G401 (cell line): ENCODE measurements at regions of chr14 and their contacts with region 1.

Region 1: GRCh38 chr14:68444449-68445168 is 348.3 kb downstream of the ZFP36L1 start:
- DNase-seq: no peak

Region 2: GRCh38 chr14:68076451-68076850 is 368.2 kb before region 1 on chr14:
- in situ Hi-C with region 1: no loop called
- DNase-seq: no peak

Region 3: GRCh38 chr14:68408680-68409079 is 35.9 kb before region 1 on chr14:
- in situ Hi-C with region 1: loop called (anchors 5 kb)
- DNase-seq: no peak

Region 4: DNA sequence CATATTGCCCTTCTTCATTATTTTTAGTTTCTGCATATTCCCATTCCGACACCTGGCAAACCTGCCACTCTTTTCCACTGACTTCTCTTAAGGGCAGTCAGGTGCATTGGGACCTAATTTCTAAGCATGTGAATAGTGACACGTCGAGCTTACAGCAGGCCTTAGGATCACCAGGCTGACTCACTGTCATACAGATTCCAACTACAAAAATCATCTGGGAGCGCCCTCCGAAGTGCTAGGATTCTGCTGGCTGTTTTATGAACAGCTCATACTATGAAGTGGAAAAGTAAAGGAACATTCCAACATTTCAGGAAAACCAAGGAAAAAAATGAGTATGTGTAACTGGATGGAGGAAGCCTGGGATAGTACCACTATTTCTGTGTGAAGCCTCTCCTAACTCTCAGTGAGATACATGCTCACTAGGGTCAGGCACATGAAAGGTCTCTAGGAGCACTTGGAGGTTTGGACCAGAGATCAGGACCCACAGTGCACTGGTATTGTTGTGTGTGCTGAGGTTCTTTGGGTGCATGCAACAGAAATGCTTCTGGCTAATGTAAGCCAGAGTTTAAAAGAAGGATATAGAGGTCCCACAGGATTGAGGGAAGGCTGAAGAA is 90.9 kb after region 1 on chr14:
- in situ Hi-C with region 1: no loop called
- DNase-seq: no peak

Region 5: GRCh38 chr14:68807148-68807600 is 362.6 kb after region 1 on chr14:
- in situ Hi-C with region 1: no loop called
- DNase-seq: no peak